ENCODE measurements at regions of chr10 and their contacts with region 1.

Region 1: GRCh38 chr10:110547139-110547761 is 20.2 kb upstream of the SMC3 start:
- DNase-seq: no peak
- ATAC-seq: peak; percentile 72
- H3K4me3 ChIP-seq: no peak overlapping the region
- H3K27ac ChIP-seq: no peak overlapping the region
- H3K4me1 ChIP-seq: no peaks in the 10 kb centered on the region
- H3K27me3 ChIP-seq: no peaks in the 10 kb centered on the region

Region 2: GRCh38 chr10:110311357-110311949 is 235.8 kb before region 1 on chr10:
- intact Hi-C with region 1: loop called (anchors 2 to 5 kb)
- DNase-seq: no peak
- ATAC-seq: peak; percentile 59
- H3K4me3 ChIP-seq: no peak overlapping the region
- H3K27ac ChIP-seq: no peak overlapping the region
- H3K4me1 ChIP-seq: no peaks in the 10 kb centered on the region
- H3K27me3 ChIP-seq: peaks cover 0 to 3% of the 10 kb centered on the region in 2 donors

Region 3: DNA sequence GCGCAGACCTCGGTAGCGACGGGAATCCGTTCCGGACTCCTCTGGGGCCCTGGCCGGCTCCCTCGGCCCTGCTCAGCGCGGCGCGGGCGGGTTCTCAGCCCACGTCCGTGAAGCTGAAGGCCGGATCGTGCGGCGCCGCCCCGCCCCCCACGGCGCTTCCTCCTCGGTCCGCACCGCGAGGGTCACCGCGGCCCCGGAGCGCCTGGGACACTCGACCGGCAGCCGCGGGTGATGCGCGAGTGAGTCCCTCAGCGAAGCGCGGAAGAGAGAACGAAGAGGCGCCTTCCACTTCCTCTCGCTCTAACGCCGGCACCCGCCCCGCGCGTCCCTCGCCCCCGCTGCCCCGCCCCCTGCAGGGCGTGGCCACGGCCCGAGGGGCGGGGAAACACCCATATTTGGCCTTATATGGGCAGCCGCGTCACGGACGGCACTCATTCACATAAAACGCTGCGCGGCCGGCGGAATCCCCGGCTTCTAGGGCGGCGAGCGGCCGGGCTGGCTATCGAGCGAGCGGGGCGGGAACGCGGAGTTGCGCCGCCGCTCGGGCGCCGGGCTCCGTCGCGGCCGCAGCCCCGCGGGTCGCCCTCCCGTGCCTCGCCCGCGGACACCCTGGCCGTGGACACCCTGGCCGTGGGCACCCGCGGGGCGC is 49.7 kb before region 1 on chr10 and contains the start of gene DUSP5:
- intact Hi-C with region 1: loop called in 1 of 2 experiments (anchors 5 kb)
- DNase-seq: peak; percentile 96 to 97
- ATAC-seq: peak; percentile 96
- H3K4me3 ChIP-seq: peak within 1 kb of the TSS; percentile 38 to 80
- H3K27ac ChIP-seq: peak within 1 kb of the TSS in 1 of 2 donors; percentile 58
- H3K4me1 ChIP-seq: no peaks in the 10 kb centered on the region
- H3K27me3 ChIP-seq: peaks cover 0 to 2% of the 10 kb centered on the region in 2 donors
- total RNA-seq, gene DUSP5: 10.4 to 30.3 TPM

Region 4: GRCh38 chr10:110508806-110509544 is 38.3 kb before region 1 on chr10:
- intact Hi-C with region 1: loop called in 1 of 2 experiments (anchors 5 kb)
- DNase-seq: peak in 1 of 2 donors; percentile 55
- ATAC-seq: no peak
- H3K4me3 ChIP-seq: no peak overlapping the region
- H3K27ac ChIP-seq: no peak overlapping the region
- H3K4me1 ChIP-seq: no peaks in the 10 kb centered on the region
- H3K27me3 ChIP-seq: no peaks in the 10 kb centered on the region

Region 5: GRCh38 chr10:110671788-110672579 is 124.7 kb after region 1 on chr10:
- intact Hi-C with region 1: no loop called
- DNase-seq: peak; percentile 81 to 92
- ATAC-seq: peak; percentile 91
- H3K4me3 ChIP-seq: peak overlapping the region; percentile 84 to 85
- H3K27ac ChIP-seq: peak overlapping the region in 1 of 2 donors; percentile 78
- H3K4me1 ChIP-seq: peaks cover 2 to 6% of the 10 kb centered on the region in 2 donors
- H3K27me3 ChIP-seq: no peaks in the 10 kb centered on the region